GM10248 (cell line): ENCODE measurements at regions of chr3 and their contacts with region 1.

Region 1: DNA sequence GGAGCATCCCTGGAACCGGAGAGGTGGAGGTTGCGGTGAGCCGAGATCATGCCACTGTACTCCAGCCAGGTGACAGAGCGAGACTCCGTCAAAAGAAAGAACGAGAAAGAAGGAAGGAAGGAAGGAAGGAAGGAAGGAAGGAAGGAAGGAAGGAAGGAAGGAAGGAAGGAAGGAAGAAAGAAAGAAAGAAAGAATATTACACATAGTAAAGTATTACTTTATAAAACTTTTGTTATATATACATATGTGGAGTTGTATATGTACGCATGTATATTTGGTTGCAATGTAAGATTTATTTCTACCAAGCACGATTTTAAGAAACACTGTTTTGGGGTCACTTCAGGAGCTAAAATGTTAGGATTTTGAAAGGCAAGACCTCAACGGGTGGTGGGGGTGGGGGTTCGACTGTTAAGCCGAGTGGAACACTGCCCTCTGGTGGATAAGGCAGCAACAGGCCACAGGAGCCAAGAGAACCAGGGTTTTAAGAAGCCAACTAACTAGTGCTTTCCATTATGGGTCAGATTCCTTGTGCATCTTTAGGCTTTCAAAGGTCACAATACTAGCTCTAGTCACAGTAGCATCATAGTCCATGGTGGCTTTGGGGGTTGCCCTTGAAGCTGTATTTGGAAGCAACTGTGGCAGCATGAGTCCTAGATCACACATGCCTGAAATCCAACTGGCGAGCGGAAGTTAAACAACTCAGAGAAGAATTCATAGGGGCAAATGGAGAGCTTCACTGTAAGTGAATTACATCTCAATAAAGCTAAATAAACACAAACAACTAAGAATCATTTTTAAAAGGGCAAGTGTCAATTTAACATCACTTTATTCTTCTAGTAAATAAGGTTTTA is 22.5 kb downstream of the GLB1 start:
- DNase-seq: peak; percentile 78
- CTCF ChIP-seq: peak; percentile 88

Region 2: GRCh38 chr3:33052671-33053070 is 21.8 kb before region 1 on chr3:
- CTCF ChIA-PET with region 1: interaction called, 14 read pairs
- POLR2A ChIA-PET with region 1: no interaction called
- DNase-seq: no peak
- CTCF ChIP-seq: no peak

Region 3: GRCh38 chr3:33063651-33064051 is 10.8 kb before region 1 on chr3:
- CTCF ChIA-PET with region 1: interaction called, 58 read pairs
- POLR2A ChIA-PET with region 1: no interaction called
- DNase-seq: peak; percentile 26
- CTCF ChIP-seq: no peak

Region 4: DNA sequence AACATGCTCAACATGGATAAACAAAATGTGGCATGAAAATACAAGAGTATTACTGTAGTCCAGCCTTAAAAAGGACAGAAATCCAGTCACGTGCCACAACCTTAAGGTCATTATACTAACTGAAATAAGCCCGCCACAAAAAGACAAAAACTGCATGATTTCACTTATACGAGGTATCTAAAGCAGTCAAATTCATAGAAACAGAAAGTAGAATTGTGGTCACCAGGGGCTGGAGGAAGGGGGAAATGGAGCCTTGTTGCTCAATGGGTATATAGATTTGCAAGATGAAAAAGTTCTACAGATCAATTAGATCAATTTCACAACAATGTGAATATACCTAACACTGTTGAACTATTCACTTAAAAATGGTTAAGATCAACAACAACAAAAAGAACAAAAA is 15.1 kb after region 1 on chr3:
- CTCF ChIA-PET with region 1: interaction called, 23 read pairs
- POLR2A ChIA-PET with region 1: no interaction called
- DNase-seq: no peak
- CTCF ChIP-seq: no peak

Region 5: GRCh38 chr3:33096093-33096868 is 21.8 kb after region 1 on chr3:
- CTCF ChIA-PET with region 1: interaction called, 16 read pairs
- POLR2A ChIA-PET with region 1: no interaction called
- DNase-seq: peak; percentile 55
- CTCF ChIP-seq: no peak